PC-3 (cell line): ENCODE measurements at regions of chr2 and their contacts with region 1.

Region 1: GRCh38 chr2:8836971-8837794 is at the start of gene KIDINS220:
- DNase-seq: peak; percentile 86
- ATAC-seq: peak; percentile 83
- H3K4me3 ChIP-seq: peak within 1 kb of the TSS; percentile 82
- H3K27ac ChIP-seq: no peak within 1 kb of the TSS
- H3K4me1 ChIP-seq: peaks cover 13% of the 10 kb centered on the region
- H3K27me3 ChIP-seq: no peaks in the 10 kb centered on the region
- CTCF ChIP-seq: no peak
- total RNA-seq, gene KIDINS220: 35.3 and 37.6 TPM in 2 replicates

Region 2: DNA sequence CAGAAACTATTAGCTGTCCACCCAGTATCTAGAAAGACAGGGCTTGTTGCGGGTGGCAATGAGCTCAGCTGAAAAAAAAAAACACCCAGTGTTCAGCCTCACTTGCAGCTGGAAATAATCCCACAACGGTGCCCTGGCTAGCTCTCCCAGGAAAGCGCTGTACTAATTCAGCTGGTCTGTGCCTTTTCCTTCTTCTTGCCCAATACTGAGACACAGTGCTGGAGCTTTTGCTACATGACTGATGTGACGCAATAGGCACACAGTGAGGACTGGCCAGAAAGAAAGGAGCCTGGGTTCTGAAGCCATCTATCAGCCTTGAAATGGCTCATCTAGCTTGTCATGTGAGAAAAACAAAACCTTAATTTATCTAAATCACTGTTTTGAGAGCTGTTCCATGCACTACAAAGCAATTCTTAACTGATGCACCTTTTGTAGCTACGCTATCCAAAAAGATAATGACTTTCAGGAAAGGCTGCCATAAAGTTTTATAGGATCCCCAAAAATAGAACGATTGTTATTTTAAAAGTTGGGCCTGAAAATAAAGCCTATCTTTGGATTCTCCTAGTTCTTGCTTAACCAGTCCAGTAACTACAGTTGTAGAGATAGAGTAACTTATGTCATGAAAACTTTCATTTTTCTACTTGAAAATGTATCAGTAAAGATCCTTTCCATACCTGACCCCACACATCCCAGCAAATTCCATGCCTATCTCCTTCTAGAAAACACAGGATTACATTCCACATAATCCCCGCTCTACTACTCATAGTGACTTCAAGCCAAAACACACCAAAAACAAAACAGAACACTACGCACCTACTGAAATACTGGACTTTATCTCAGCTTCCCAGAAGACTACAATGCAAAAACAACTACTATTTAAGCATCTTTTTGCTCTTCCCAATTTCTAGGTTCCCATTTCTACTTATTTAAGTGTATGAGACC is 15.6 kb before region 1 on chr2:
- CTCF ChIA-PET with region 1: interaction called, 11 read pairs
- POLR2A ChIA-PET with region 1: no interaction called
- intact Hi-C with region 1: no loop called
- DNase-seq: no peak
- ATAC-seq: no peak
- H3K4me3 ChIP-seq: no peak overlapping the region
- H3K27ac ChIP-seq: no peak overlapping the region
- H3K4me1 ChIP-seq: 0 out of 2 replicates have a peak, but pooled peaks cover 4% of the 10 kb centered on the region
- H3K27me3 ChIP-seq: no peaks in the 10 kb centered on the region
- CTCF ChIP-seq: no peak

Region 3: GRCh38 chr2:9102855-9103831 is 266.0 kb after region 1 on chr2:
- CTCF ChIA-PET with region 1: no interaction called
- POLR2A ChIA-PET with region 1: no interaction called
- intact Hi-C with region 1: no loop called
- DNase-seq: peak; percentile 79
- ATAC-seq: peak; percentile 82
- H3K4me3 ChIP-seq: peak overlapping the region; percentile 26
- H3K27ac ChIP-seq: peak overlapping the region; percentile 99
- H3K4me1 ChIP-seq: peaks cover 49% of the 10 kb centered on the region
- H3K27me3 ChIP-seq: no peaks in the 10 kb centered on the region
- CTCF ChIP-seq: no peak; the same call in 1 of the 2 replicates